ENCODE measurements at regions of chr11 and their contacts with region 1.

Region 1: GRCh38 chr11:96464700-96465307 is 75.0 kb downstream of the JRKL start:
- H3K4me3 ChIP-seq: no peak overlapping the region
- H3K27ac ChIP-seq: no peak overlapping the region
- H3K4me1 ChIP-seq: no peaks in the 10 kb centered on the region
- CTCF ChIP-seq: peak; percentile 49; the same call in 1 of the 2 replicates

Region 2: GRCh38 chr11:94834911-94835593 is 1629.8 kb before region 1 on chr11:
- CTCF ChIA-PET with region 1: no interaction called
- POLR2A ChIA-PET with region 1: no interaction called
- H3K4me3 ChIP-seq: no peak overlapping the region
- H3K27ac ChIP-seq: no peak overlapping the region
- H3K4me1 ChIP-seq: no peaks in the 10 kb centered on the region
- CTCF ChIP-seq: no peak

Region 3: DNA sequence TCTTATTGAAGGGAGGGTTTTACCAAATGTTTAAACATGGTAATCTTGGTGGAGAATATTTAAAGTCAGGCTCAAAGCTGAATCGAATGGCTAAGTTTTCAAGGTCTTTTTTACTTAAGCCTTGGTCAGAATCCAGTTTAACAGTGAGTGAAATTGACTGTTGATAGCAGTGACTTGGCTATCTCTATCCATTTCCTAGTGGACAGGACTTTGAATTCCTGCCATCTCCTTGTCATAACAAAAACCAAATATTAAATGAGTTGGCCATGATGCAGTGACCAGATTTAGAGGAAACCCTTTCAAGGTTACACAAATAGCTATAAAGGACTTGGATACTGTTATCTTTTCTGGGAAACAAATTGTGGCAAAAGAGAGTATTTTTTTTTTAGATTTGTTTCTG is 17.0 kb after region 1 on chr11:
- CTCF ChIA-PET with region 1: interaction called, 23 read pairs
- POLR2A ChIA-PET with region 1: no interaction called
- H3K4me3 ChIP-seq: no peak overlapping the region
- H3K27ac ChIP-seq: no peak overlapping the region
- H3K4me1 ChIP-seq: no peaks in the 10 kb centered on the region
- CTCF ChIP-seq: no peak

Region 4: GRCh38 chr11:97140885-97141494 is 676.2 kb after region 1 on chr11:
- CTCF ChIA-PET with region 1: interaction called, 11 read pairs
- POLR2A ChIA-PET with region 1: no interaction called
- H3K4me3 ChIP-seq: no peak overlapping the region
- H3K27ac ChIP-seq: no peak overlapping the region
- H3K4me1 ChIP-seq: no peaks in the 10 kb centered on the region
- CTCF ChIP-seq: no peak